ENCODE measurements at regions of chr10 and their contacts with region 1.

Region 1: GRCh38 chr10:102604379-102604960 is 39.8 kb upstream of the TRIM8 start:
- DNase-seq: no peak
- ATAC-seq: peak in 3 of 8 donors; percentile 12 to 46 (median 26)
- H3K4me3 ChIP-seq: no peak overlapping the region
- H3K27ac ChIP-seq: peak overlapping the region in 9 of 10 donors; percentile 9 to 93 (median 56)
- H3K4me1 ChIP-seq: peaks cover 14 to 66% (median 57%) of the 10 kb centered on the region in 9 donors
- H3K27me3 ChIP-seq: no peaks in the 10 kb centered on the region
- CTCF ChIP-seq: peak in 1 of 9 donors; percentile 7

Region 2: DNA sequence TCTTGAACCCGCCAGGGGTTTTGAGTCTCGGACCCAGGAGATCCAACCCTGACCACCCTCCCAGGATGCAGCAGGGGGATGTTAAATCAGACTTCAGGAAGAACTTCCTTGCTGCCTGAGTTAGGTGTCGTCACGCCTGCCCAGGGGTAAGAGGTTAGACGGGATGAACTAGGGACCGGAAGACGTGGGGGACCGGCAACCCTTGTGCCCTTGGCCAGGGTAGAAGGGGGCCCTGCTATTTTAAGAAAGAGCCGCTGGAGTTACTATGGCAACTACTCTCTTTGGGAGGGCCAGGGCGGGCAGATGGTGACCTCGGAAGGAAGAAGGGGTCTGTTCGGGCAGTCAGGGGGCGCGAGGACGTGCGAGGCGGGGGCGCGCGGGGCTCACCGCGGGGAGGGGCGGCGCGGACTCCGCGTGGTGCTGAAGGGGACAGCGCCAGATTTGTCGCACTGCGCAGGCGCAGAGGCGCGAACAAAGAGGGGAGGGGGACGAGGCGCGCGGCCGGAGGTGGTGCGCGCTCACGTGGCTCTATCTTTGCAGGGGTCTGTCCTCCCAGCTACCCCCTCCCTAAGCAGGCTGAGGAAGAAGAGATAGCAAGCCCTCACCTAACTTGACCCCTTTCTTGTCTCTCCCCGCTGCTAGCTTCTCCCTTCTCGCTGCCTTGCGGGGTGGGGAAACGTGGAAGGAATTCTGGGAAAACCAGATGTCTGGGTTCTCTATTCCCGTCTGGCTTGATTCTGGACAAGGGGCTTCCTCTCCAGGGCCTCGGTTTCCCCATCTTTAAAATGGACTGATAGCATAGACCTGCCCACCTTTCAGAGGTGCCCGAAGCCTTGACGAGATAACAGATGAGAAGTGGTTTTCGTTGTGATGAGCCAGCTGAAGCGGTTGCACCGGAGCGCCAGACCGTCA is 184.9 kb before region 1 on chr10:
- intact Hi-C with region 1: no loop called
- DNase-seq: peak; percentile 38 to 70
- ATAC-seq: peak in 5 of 8 donors; percentile 3 to 38 (median 26)
- H3K4me3 ChIP-seq: peak overlapping the region; percentile 80 to 100 (median 94)
- H3K27ac ChIP-seq: peak overlapping the region in 6 of 10 donors; percentile 85 to 97 (median 91)
- H3K4me1 ChIP-seq: peaks cover 15 to 40% (median 36%) of the 10 kb centered on the region in 9 donors
- H3K27me3 ChIP-seq: peaks cover 0 to 47% (median 45%) of the 10 kb centered on the region in 7 donors
- CTCF ChIP-seq: no peak

Region 3: GRCh38 chr10:102635377-102635776 is 30.9 kb after region 1 on chr10:
- intact Hi-C with region 1: loop called in 2 of 10 experiments (anchors 5 kb)
- DNase-seq: no peak
- ATAC-seq: peak in 2 of 8 donors; percentile 10 to 19
- H3K4me3 ChIP-seq: no peak overlapping the region
- H3K27ac ChIP-seq: peak overlapping the region in 5 of 10 donors; percentile 4 to 81 (median 23)
- H3K4me1 ChIP-seq: peaks cover 24 to 49% (median 28%) of the 10 kb centered on the region in 9 donors
- H3K27me3 ChIP-seq: no peaks in the 10 kb centered on the region
- CTCF ChIP-seq: no peak